ENCODE measurements at regions of chr3 and their contacts with region 1.

Region 1: GRCh38 chr3:24483873-24484272 is 10.8 kb downstream of the THRB start:
- DNase-seq: no peak
- ATAC-seq: no peak

Region 2: DNA sequence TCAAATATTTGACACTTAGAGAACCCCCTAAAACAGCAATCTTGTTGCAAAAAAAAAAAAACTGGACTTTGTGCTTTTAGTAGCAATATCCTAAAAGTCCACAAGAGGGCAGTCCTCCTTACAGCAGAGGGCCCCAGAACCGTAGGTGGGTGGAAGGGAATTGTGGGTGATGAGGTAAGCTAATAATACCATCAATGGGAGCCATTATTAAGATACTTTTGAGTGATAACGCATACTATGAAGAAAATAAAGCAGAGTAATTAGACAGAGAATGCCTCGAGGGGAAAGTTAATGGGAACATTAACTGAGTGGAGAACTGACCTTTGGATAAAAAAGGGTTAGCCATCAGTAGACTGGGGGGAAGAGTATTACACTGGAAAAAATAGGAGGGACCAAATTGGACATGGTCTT is 219.1 kb before region 1 on chr3:
- intact Hi-C with region 1: loop called in 1 of 2 experiments (anchors 10 kb)
- DNase-seq: no peak
- ATAC-seq: peak; percentile 54

Region 3: GRCh38 chr3:24802614-24803013 is 318.7 kb after region 1 on chr3:
- intact Hi-C with region 1: no loop called
- DNase-seq: no peak
- ATAC-seq: no peak

Measured in left colon (tissue), 2 donors.